ENCODE measurements at regions of chr3 and their contacts with region 1.

Region 1: DNA sequence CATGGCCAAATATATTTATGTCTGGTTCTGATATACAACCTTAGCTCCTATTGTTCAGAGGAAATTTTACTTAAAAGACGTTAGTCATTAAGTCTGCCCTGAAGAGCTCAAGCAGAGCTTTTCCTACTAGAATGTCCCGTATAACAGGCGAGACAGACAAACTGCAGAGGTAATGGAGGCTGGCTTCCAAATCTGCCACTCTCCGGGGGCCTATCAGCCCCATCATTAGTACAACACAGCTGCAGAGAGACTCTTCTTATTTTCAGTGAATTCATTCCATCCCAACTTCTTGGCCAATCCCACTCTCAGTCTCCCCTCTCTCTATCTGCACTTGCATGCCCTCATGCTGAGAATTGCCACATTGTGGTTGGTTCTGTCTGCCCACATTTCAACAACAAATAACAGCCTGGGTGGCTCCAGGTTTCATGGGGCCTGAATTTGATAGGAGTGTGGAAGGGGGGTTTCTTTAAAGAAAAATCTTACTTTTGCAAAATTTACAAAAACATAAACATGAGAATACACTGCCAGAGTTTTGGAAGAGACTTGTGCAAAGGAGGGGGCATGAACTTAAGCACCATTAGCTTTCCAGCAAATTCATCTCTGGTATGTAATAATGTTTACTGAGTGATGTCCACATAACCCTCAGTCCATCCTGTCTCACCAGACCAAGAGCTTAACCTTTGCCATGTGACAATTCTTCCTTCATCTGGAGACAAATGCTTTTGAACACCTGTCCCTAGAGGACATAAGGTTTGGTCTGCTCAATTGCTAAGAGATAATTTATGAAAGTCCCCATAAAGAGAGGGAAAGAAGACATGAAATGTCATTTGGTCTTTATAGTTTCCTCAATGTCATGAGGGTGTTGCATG is 412.6 kb downstream of the ERC2 start:
- DNase-seq: peak; percentile 48 to 65
- H3K4me3 ChIP-seq: no peak overlapping the region
- H3K4me3 Mint-ChIP-seq: no peak overlapping the region
- H3K27ac Mint-ChIP-seq: peak overlapping the region; percentile 72
- H3K4me1 ChIP-seq: peaks cover 72% of the 10 kb centered on the region
- H3K4me1 Mint-ChIP-seq: peaks cover 60% of the 10 kb centered on the region
- H3K27me3 ChIP-seq: no peaks in the 10 kb centered on the region
- H3K27me3 Mint-ChIP-seq: no peaks in the 10 kb centered on the region
- CTCF ChIP-seq: no peak

Region 2: DNA sequence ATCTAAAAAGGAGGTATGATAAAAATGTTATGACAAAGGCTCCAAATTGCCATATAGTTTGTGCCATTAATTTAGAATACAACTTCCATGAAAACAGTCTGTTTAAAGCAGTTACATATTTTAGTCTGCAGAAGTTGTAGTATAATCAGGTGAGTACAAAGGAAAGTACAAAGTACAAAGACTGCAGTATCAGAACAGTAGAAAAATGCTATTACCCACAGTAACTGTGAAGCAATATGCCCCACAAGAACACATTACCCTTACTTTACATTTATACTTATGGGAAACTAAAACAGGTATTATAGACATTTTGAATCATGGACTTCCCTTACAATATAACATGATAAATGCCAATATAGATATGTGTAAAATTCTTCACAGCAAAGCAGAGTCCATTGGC is 14.1 kb after region 1 on chr3:
- CTCF ChIA-PET with region 1: no interaction called
- POLR2A ChIA-PET with region 1: no interaction called
- intact Hi-C with region 1: loop called (anchors 1 kb)
- DNase-seq: no peak
- H3K4me3 ChIP-seq: no peak overlapping the region
- H3K4me3 Mint-ChIP-seq: no peak overlapping the region
- H3K27ac Mint-ChIP-seq: peak overlapping the region; percentile 64
- H3K4me1 ChIP-seq: peaks cover 15% of the 10 kb centered on the region
- H3K4me1 Mint-ChIP-seq: peaks cover 17% of the 10 kb centered on the region
- H3K27me3 ChIP-seq: no peaks in the 10 kb centered on the region
- H3K27me3 Mint-ChIP-seq: no peaks in the 10 kb centered on the region
- CTCF ChIP-seq: no peak

Region 3: DNA sequence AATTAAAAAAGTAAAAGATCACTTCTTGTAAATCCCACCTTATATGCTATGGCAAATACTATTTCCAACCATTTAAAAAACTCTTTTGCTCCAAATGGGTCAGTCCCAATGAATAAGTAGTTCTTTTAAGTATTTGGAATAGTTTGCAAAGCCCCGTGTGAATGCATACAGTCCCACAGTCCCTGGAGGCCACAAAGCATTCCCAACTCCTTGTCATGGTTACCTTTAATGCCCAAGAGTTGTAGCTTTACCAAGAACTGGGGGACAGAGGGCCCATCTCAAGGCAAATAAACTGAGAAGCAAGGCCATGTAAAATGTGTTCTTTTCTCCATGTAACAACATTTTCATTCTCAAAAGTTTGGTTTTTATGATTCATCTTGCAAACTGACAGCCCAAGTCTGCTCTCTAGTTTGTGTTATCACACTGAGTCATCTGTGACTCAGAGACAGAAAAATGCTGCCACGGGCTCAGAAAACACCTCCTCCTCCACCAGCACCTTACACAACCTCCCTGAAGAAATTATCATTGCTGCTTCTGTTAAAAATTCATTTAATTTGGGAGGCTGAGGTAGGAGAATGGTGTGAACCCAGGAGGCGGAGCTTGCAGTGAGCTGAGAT is 76.4 kb after region 1 on chr3:
- CTCF ChIA-PET with region 1: interaction called, 3 read pairs
- POLR2A ChIA-PET with region 1: no interaction called
- intact Hi-C with region 1: loop called (anchors 2 kb)
- DNase-seq: peak; percentile 69 to 70
- H3K4me3 ChIP-seq: no peak overlapping the region
- H3K4me3 Mint-ChIP-seq: peak overlapping the region; percentile 31
- H3K27ac Mint-ChIP-seq: peak overlapping the region; percentile 57
- H3K4me1 ChIP-seq: peaks cover 54% of the 10 kb centered on the region
- H3K4me1 Mint-ChIP-seq: peaks cover 22% of the 10 kb centered on the region
- H3K27me3 ChIP-seq: no peaks in the 10 kb centered on the region
- H3K27me3 Mint-ChIP-seq: no peaks in the 10 kb centered on the region
- CTCF ChIP-seq: no peak

Measured in Caco-2 (cell line).